ENCODE measurements at regions of chr1 and their contacts with region 1.

Region 1: DNA sequence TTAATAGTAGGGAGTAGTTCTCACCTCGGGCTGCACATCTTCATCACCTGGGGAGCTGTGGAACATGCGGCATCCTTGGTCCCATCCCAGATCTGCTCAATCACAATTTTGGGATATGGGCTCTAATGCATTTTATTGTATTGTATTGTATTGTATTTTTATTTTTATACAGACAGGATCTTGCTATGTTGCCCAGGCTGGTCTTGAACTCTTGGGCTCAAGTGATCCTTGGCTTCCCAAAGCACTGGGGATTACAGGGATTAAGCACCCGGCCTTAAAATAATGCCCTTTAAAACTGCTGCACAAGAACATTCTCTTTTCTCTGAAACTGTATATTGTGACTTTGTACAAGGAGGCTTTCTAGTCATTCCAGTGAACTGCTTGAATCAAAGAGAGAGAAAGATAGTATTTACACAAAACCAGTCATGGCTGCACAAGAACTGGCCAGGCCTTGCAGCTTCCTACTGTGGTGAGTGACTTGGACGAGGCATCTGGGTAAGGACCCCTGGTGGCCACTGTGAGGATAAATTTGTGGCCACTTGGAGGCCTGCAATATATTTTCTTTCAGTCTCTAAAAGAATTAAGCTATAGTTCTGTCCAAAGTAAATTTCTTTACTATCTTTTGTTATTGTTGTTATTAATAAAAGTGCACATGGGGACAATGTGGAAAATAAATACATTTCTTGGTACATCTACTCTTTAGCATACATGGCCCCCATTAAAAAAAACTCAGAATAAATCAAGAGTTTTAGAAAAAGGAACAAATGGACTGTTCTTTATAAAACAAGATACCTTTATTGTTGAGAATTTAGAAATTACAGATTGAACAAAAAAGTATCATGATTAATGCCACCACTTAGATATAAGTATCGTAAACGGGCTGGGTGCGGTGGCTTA is 48.0 kb downstream of the TBCE start:
- DNase-seq: peak; percentile 70
- ATAC-seq: peak; percentile 76
- H3K4me3 ChIP-seq: no peak overlapping the region
- H3K4me3 Mint-ChIP-seq: no peak overlapping the region
- H3K27ac ChIP-seq: no peak overlapping the region
- H3K27ac Mint-ChIP-seq: no peak overlapping the region
- H3K4me1 ChIP-seq: no peaks in the 10 kb centered on the region
- H3K4me1 Mint-ChIP-seq: no peaks in the 10 kb centered on the region
- H3K27me3 ChIP-seq: no peaks in the 10 kb centered on the region
- H3K27me3 Mint-ChIP-seq: no peaks in the 10 kb centered on the region
- CTCF ChIP-seq: peak; percentile 91

Region 2: GRCh38 chr1:234114648-234115307 is 1300.5 kb before region 1 on chr1:
- CTCF ChIA-PET with region 1: interaction called, 3 read pairs
- POLR2A ChIA-PET with region 1: no interaction called
- intact Hi-C with region 1: loop called (anchors 5 kb)
- DNase-seq: peak; percentile 41
- ATAC-seq: no peak
- H3K4me3 ChIP-seq: no peak overlapping the region
- H3K4me3 Mint-ChIP-seq: no peak overlapping the region
- H3K27ac ChIP-seq: no peak overlapping the region
- H3K27ac Mint-ChIP-seq: no peak overlapping the region
- H3K4me1 ChIP-seq: peaks cover 0 to 4% of the 10 kb centered on the region in 2 donors
- H3K4me1 Mint-ChIP-seq: peaks cover 5% of the 10 kb centered on the region
- H3K27me3 ChIP-seq: no peaks in the 10 kb centered on the region
- H3K27me3 Mint-ChIP-seq: peaks cover 12% of the 10 kb centered on the region
- CTCF ChIP-seq: peak; percentile 69

Region 3: GRCh38 chr1:235105051-235106043 is 309.9 kb before region 1 on chr1:
- CTCF ChIA-PET with region 1: interaction called, 52 read pairs
- POLR2A ChIA-PET with region 1: interaction called, 4 read pairs
- intact Hi-C with region 1: loop called (anchors 1 kb)
- DNase-seq: no peak
- ATAC-seq: no peak
- H3K4me3 ChIP-seq: peak overlapping the region in 2 of 5 experiments; percentile 8 to 33
- H3K4me3 Mint-ChIP-seq: peak overlapping the region; percentile 84
- H3K27ac ChIP-seq: no peak overlapping the region
- H3K27ac Mint-ChIP-seq: peak overlapping the region; percentile 22
- H3K4me1 ChIP-seq: peaks cover 7 to 28% of the 10 kb centered on the region in 2 donors
- H3K4me1 Mint-ChIP-seq: peaks cover 31% of the 10 kb centered on the region
- H3K27me3 ChIP-seq: no peaks in the 10 kb centered on the region
- H3K27me3 Mint-ChIP-seq: no peaks in the 10 kb centered on the region
- CTCF ChIP-seq: no peak

Region 4: DNA sequence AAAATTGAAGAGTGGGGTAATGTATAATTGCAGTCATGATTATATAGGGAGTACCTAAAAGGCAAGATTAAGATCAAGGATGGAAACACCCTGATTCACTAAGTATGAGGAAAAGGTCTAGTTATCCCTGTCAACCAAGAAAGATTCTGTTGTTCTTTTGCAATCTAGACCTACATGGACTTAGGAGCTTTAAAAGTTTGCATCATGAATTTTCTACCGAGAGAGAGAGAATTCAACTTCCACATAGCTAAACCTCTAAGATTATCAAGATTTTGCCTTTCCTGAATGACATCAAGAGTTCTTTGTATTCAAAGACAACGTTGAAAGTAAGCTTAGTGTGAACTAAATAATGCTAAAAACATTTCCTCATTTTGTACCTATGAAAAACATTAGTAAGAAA is 175.4 kb before region 1 on chr1:
- CTCF ChIA-PET with region 1: interaction called, 40 read pairs
- POLR2A ChIA-PET with region 1: no interaction called
- intact Hi-C with region 1: no loop called
- DNase-seq: no peak
- ATAC-seq: no peak
- H3K4me3 ChIP-seq: no peak overlapping the region
- H3K4me3 Mint-ChIP-seq: no peak overlapping the region
- H3K27ac ChIP-seq: no peak overlapping the region
- H3K27ac Mint-ChIP-seq: no peak overlapping the region
- H3K4me1 ChIP-seq: no peaks in the 10 kb centered on the region
- H3K4me1 Mint-ChIP-seq: peaks cover 14% of the 10 kb centered on the region
- H3K27me3 ChIP-seq: no peaks in the 10 kb centered on the region
- H3K27me3 Mint-ChIP-seq: no peaks in the 10 kb centered on the region
- CTCF ChIP-seq: no peak

Region 5: GRCh38 chr1:235259133-235259778 is 156.0 kb before region 1 on chr1:
- CTCF ChIA-PET with region 1: interaction called, 58 read pairs
- POLR2A ChIA-PET with region 1: no interaction called
- intact Hi-C with region 1: no loop called
- DNase-seq: peak; percentile 37
- ATAC-seq: peak; percentile 60
- H3K4me3 ChIP-seq: peak overlapping the region in 1 of 5 experiments; percentile 3
- H3K4me3 Mint-ChIP-seq: peak overlapping the region; percentile 49
- H3K27ac ChIP-seq: peak overlapping the region in 1 of 2 donors; percentile 67
- H3K27ac Mint-ChIP-seq: peak overlapping the region; percentile 82
- H3K4me1 ChIP-seq: peaks cover 24 to 25% of the 10 kb centered on the region in 2 donors
- H3K4me1 Mint-ChIP-seq: peaks cover 52% of the 10 kb centered on the region
- H3K27me3 ChIP-seq: no peaks in the 10 kb centered on the region
- H3K27me3 Mint-ChIP-seq: no peaks in the 10 kb centered on the region
- CTCF ChIP-seq: no peak

Region 6: DNA sequence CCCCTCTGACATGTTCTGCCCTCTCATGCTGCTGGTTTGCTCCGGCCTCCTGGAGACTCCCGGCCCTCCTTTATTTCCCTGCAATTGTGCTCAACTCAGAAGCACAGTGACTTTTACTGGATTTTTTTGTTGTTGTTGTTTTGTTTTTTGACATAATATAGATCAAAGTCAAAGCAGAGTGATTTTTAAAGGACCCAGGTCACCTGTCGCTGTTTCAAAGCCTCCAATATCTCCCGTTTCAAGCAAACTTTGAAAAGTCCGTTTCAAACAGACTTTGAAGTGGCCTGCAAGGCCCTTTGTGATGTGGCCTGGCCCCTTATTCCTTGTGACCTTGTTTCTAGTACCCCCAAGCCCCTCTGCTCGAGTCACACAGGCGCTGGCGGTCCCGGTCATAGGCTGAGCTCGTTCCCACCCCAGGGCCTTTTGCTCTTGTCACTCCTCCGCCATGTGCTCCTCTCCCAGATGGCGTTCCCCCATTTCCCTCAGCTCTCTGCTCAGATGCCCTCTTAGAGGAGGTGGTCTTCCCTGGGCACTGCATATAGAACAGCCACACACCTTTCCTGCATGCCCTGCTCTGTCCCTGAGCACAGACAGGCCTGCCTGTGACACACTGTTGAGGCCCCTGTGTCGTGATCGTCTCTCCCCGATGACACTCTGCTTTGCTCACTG is 10.2 kb after region 1 on chr1:
- CTCF ChIA-PET with region 1: interaction called, 20 read pairs
- POLR2A ChIA-PET with region 1: no interaction called
- intact Hi-C with region 1: no loop called
- DNase-seq: no peak
- ATAC-seq: no peak
- H3K4me3 ChIP-seq: no peak overlapping the region
- H3K4me3 Mint-ChIP-seq: no peak overlapping the region
- H3K27ac ChIP-seq: no peak overlapping the region
- H3K27ac Mint-ChIP-seq: no peak overlapping the region
- H3K4me1 ChIP-seq: peaks cover 3 to 8% of the 10 kb centered on the region in 2 donors
- H3K4me1 Mint-ChIP-seq: peaks cover 22% of the 10 kb centered on the region
- H3K27me3 ChIP-seq: no peaks in the 10 kb centered on the region
- H3K27me3 Mint-ChIP-seq: no peaks in the 10 kb centered on the region
- CTCF ChIP-seq: no peak

Region 7: DNA sequence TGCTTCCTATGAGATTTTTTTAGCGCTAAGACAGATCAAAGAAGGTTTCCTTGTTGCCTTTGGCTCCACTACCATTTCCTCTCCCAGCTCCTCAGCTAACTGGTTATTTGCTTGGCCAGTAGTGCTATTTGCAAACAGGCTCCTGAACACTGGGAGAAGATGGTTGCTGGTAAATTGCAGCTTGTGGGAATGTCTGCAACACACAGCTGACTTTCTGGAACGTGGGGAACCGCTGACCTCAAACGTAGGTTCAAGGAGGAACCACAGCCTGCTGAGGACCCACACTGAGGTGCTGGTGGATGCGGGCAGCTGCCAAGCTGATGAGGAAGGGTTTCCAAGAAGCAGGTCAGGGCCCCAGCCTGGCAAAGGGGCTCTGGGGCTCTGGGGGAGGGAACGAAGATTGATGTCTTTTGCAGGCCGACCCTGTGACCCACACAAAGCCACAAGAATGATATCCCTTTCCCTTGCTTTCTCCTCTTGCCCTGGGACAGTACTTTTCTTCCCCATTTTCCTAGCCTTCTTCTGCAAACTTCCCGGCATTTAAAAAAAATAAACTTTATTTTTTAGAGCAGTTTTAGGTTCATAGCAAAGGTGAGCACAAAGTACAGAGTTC is 209.6 kb after region 1 on chr1:
- CTCF ChIA-PET with region 1: no interaction called
- POLR2A ChIA-PET with region 1: no interaction called
- intact Hi-C with region 1: no loop called
- DNase-seq: no peak
- ATAC-seq: no peak
- H3K4me3 ChIP-seq: no peak overlapping the region
- H3K4me3 Mint-ChIP-seq: no peak overlapping the region
- H3K27ac ChIP-seq: no peak overlapping the region
- H3K27ac Mint-ChIP-seq: no peak overlapping the region
- H3K4me1 ChIP-seq: no peaks in the 10 kb centered on the region
- H3K4me1 Mint-ChIP-seq: no peaks in the 10 kb centered on the region
- H3K27me3 ChIP-seq: peaks cover 0 to 5% (median 1%) of the 10 kb centered on the region in 4 experiments
- H3K27me3 Mint-ChIP-seq: peaks cover 18% of the 10 kb centered on the region
- CTCF ChIP-seq: no peak

Measured in B cell (primary cell).